ENCODE measurements at regions of chr10 and their contacts with region 1.

Region 1: GRCh38 chr10:80580638-80581468 is 43.2 kb downstream of the SH2D4B start:
- DNase-seq: no peak
- ATAC-seq: no peak
- H3K4me3 ChIP-seq: no peak overlapping the region
- H3K27ac ChIP-seq: no peak overlapping the region
- H3K4me1 ChIP-seq: peaks cover 0 to 16% (median 0%) of the 10 kb centered on the region in 9 donors
- H3K27me3 ChIP-seq: peaks cover 0 to 4% (median 0%) of the 10 kb centered on the region in 7 donors
- CTCF ChIP-seq: no peak

Region 2: GRCh38 chr10:80535671-80536365 is 45.0 kb before region 1 on chr10:
- intact Hi-C with region 1: loop called in 1 of 10 experiments (anchors 5 kb)
- DNase-seq: peak; percentile 70 to 82
- ATAC-seq: peak; percentile 82 to 94 (median 90)
- H3K4me3 ChIP-seq: peak overlapping the region; percentile 21 to 59 (median 48)
- H3K27ac ChIP-seq: peak overlapping the region in 8 of 10 donors; percentile 58 to 90 (median 71)
- H3K4me1 ChIP-seq: peaks cover 0 to 37% (median 18%) of the 10 kb centered on the region in 9 donors
- H3K27me3 ChIP-seq: no peaks in the 10 kb centered on the region
- CTCF ChIP-seq: peak; percentile 56 to 83 (median 73)

Measured in heart right ventricle (tissue), 16 donors.